ENCODE measurements at regions of chr19 and their contacts with region 1.

Region 1: GRCh38 chr19:40444192-40445028 is at the start of gene SERTAD3:
- DNase-seq: peak; percentile 98
- ATAC-seq: peak; percentile 68
- H3K4me3 Mint-ChIP-seq: peak within 1 kb of the TSS; percentile 98
- H3K27ac Mint-ChIP-seq: peak within 1 kb of the TSS; percentile 97
- H3K4me1 Mint-ChIP-seq: peaks cover 26% of the 10 kb centered on the region
- H3K27me3 Mint-ChIP-seq: no peaks in the 10 kb centered on the region
- CTCF ChIP-seq: no peak
- total RNA-seq, gene SERTAD3: 43.5 and 48.4 TPM in 2 replicates

Region 2: DNA sequence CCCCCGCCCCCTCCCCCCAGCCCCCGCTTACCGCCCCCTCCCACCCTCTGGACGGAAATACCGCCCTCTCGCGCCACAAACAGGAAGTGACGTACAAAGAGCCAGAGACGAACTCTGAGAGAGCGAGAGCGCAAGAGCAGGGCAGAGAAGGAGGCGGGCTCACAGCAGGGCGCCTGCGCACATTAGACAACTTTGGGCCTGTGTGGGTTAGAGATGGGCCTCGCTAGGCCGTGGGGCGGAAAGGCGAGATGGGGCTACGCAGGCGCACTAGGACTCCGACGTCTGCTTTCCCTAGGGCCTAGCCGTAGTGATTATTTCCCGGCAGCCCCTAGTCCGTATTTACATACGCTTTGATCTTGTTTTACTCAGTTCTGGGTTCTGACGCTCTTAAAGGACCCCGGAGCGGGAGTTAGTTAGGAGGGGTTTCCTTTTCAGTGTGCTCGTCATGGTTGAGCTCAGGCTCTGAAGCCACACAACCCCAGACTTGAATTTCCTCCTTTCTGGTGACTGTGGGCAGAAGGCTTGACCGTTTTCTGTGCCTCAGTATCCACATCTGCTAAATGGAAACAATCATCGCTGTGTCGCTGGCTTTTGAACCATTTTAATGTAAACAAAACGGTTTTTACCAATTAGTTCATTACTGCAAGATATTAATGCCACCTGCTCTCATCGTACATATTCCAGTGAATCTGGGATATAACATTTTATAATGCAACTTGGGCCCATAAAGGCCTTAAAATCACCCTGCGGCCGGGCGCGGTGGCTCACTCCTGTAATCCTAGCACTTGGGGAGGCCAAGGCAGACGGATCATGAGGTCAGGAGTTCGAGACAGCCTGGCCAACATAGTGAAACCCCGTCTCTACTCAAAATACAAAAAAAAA is 158.8 kb before region 1 on chr19:
- CTCF ChIA-PET with region 1: no interaction called
- POLR2A ChIA-PET with region 1: interaction called, 22 read pairs
- intact Hi-C with region 1: loop called (anchors 1 kb)
- DNase-seq: peak; percentile 92
- ATAC-seq: peak; percentile 79
- H3K4me3 Mint-ChIP-seq: peak overlapping the region; percentile 82
- H3K27ac Mint-ChIP-seq: peak overlapping the region; percentile 96
- H3K4me1 Mint-ChIP-seq: peaks cover 56% of the 10 kb centered on the region
- H3K27me3 Mint-ChIP-seq: no peaks in the 10 kb centered on the region
- CTCF ChIP-seq: no peak

Region 3: DNA sequence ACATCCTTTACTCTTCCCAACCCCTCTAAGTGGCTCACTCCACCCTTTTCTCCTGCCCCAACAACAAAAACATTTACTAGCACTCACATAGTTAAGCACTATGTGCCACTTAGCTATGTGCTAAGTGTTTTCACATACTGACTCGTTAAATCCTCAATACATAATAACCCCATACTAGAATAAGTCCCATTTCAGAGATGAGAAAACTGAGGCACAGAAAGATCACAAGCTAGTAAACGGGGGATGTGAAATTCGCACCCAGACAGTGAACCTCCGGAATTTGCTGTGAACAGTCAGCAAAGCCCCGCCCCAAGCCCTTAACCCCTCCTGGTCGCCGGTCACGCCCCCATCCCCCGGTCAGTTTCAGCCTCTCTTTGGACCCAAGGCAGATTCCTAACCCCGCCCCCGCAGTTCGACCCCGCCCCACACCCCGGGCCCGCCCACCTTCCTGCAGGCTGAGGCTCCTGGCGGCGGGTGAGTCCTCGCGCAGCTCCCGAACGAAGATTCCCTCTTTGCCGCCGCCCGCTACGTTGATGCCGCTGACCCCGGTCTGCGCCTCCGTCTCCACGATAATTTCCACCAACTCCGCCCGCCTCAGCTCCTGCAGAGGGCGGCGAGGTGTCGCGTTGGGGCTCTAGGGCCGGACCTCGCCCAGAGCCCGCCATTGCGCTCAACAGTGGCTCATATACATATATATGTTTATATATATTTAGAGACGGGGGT is 41.0 kb before region 1 on chr19:
- CTCF ChIA-PET with region 1: no interaction called
- POLR2A ChIA-PET with region 1: interaction called, 15 read pairs
- intact Hi-C with region 1: loop called (anchors 1 kb)
- DNase-seq: peak; percentile 86
- ATAC-seq: peak; percentile 81
- H3K4me3 Mint-ChIP-seq: peak overlapping the region; percentile 90
- H3K27ac Mint-ChIP-seq: peak overlapping the region; percentile 71
- H3K4me1 Mint-ChIP-seq: peaks cover 23% of the 10 kb centered on the region
- H3K27me3 Mint-ChIP-seq: peaks cover 3% of the 10 kb centered on the region
- CTCF ChIP-seq: no peak

Region 4: DNA sequence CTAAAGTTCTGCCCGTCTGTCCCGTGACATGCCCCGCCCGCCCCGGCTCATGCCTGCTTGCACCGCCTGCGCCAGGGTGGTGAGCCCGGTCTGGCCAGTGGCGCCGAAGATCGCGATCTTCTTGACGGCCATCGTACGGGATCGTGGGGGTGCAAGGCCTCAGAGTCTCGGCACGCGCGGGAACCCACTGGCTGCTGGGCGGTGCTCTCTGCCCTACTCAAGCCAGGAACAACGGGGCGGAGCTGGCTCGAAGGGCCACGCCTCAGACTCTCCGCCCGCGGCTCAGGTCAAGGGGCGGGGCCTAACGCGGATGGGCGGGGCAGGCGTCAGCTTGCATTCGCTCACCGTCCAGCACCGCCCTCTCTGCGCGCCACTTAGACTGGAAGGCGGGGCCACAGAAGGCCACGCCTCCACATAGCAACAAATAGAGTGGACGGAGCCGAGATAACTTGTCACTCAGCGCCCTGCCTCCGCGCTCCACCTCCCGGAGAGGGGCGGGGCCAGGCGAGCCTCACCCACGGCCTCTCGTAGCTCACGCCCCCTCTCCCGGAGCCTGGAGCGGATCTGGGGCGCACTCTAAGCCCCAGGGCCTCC is 21.2 kb after region 1 on chr19 and contains the start of gene BLVRB:
- CTCF ChIA-PET with region 1: interaction called, 11 read pairs
- POLR2A ChIA-PET with region 1: interaction called, 42 read pairs
- intact Hi-C with region 1: loop called (anchors 1 kb)
- DNase-seq: peak; percentile 99
- ATAC-seq: peak; percentile 89
- H3K4me3 Mint-ChIP-seq: peak within 1 kb of the TSS; percentile 81
- H3K27ac Mint-ChIP-seq: peak within 1 kb of the TSS; percentile 68
- H3K4me1 Mint-ChIP-seq: peaks cover 36% of the 10 kb centered on the region
- H3K27me3 Mint-ChIP-seq: peaks cover 14% of the 10 kb centered on the region
- CTCF ChIP-seq: no peak
- total RNA-seq, gene BLVRB: 12.3 and 14.6 TPM in 2 replicates

Region 5: GRCh38 chr19:40609561-40610395 is 165.4 kb after region 1 on chr19:
- CTCF ChIA-PET with region 1: no interaction called
- POLR2A ChIA-PET with region 1: interaction called, 12 read pairs
- intact Hi-C with region 1: loop called (anchors 5 kb)
- DNase-seq: peak; percentile 92
- ATAC-seq: peak; percentile 54
- H3K4me3 Mint-ChIP-seq: peak overlapping the region; percentile 88
- H3K27ac Mint-ChIP-seq: peak overlapping the region; percentile 94
- H3K4me1 Mint-ChIP-seq: peaks cover 60% of the 10 kb centered on the region
- H3K27me3 Mint-ChIP-seq: no peaks in the 10 kb centered on the region
- CTCF ChIP-seq: no peak

Region 6: DNA sequence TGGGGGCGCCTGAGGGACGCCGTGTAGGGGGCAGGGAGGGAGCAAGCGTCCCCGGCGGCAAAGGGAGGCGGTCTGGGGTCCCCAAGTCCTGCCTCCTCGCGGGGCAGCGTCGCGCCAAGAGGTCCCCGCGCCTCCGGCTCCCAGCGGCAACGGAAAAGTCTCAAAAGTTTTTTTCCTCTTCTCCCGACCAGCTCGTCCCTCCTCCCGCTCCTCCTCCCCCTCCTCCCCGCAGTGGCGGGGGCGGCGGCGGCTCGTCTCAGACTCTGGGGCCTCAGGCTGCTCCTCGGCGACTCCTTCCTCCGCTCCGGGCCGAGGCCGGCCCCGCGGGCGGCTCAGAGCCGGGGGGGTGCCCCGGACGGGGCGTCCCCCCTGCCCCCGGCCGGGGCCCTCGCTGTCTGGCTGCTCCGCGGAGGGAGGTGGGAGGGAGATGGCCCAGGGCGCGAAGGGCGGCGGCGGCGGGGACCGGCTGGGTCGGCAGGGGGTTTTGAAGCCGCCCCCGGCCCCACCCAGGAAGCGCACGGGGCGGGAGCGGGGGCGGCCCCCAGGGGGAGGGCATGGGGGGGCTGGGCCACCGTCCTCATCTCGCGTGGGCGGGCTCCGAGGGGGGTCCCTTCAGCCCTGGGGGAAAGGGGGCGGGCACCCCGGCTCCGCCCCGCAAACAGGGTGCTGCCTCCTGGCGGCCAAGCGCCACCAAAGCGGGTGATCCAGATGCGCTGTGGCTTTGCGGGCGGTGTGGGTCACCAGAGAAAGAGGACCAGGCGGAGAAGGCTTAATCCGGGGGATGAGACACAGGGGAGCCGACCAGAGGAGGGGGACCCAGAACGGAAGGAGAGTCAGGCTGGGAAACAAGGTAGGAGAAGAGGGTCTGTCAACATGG is 909.3 kb after region 1 on chr19 and contains the start of gene TGFB1:
- CTCF ChIA-PET with region 1: no interaction called
- POLR2A ChIA-PET with region 1: no interaction called
- intact Hi-C with region 1: loop called (anchors 5 kb)
- DNase-seq: peak; percentile 92
- ATAC-seq: peak; percentile 70
- H3K4me3 Mint-ChIP-seq: peak within 1 kb of the TSS; percentile 100
- H3K27ac Mint-ChIP-seq: peak within 1 kb of the TSS; percentile 96
- H3K4me1 Mint-ChIP-seq: peaks cover 44% of the 10 kb centered on the region
- H3K27me3 Mint-ChIP-seq: no peaks in the 10 kb centered on the region
- CTCF ChIP-seq: peak; percentile 66
- total RNA-seq, gene TGFB1: 80.7 and 88.5 TPM in 2 replicates